Right ventricle myocardium inferior (tissue), 1 donor: ENCODE measurements at regions of chr15 and their contacts with region 1.

Region 1: GRCh38 chr15:40471806-40472727 is 1.3 kb downstream of the CHST14 start:
- DNase-seq: no peak
- ATAC-seq: peak; percentile 20

Region 2: GRCh38 chr15:40440743-40441564 is 31.1 kb before region 1 on chr15 and contains the start of gene BAHD1:
- intact Hi-C with region 1: loop called (anchors 2 kb)
- DNase-seq: peak; percentile 98
- ATAC-seq: peak; percentile 92
- total RNA-seq, gene BAHD1: 17.7 TPM